Vagina (tissue), 2 donors: ENCODE measurements at regions of chr12 and their contacts with region 1.

Region 1: DNA sequence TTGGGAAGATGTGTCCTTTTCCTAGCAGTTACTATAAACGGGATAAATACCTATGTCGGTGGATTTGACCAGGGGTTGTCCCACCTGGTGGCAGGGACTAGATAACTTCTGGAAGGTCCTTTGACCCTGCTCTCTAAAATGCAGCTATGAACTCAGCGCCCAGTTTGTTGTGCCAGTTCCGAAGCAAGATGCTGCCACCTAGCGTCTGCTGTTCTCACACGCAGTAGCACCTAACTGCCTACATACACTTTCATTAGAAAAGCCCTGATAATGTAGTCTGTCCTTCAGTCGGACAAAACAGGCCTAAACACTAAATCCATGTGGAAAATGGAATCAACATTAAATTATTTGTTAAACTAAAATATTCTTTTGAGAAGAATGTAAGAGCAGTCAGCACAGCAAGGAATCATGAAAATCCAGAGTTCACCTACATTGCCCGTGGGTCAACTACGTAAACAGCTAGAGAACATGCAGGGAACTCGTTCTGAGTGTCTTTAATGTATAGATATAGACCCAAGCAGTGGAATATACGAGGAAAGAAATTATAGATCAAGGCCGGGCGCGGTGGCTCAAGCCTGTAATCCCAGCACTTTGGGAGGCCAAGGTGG is 51.1 kb upstream of the CRACR2A start:
- DNase-seq: no peak
- H3K4me3 ChIP-seq: no peak overlapping the region
- H3K27ac ChIP-seq: no peak overlapping the region
- H3K4me1 ChIP-seq: no peaks in the 10 kb centered on the region
- H3K27me3 ChIP-seq: no peaks in the 10 kb centered on the region
- CTCF ChIP-seq: peak; percentile 62 to 88 (median 74)
- POLR2A ChIP-seq: no peak

Region 2: DNA sequence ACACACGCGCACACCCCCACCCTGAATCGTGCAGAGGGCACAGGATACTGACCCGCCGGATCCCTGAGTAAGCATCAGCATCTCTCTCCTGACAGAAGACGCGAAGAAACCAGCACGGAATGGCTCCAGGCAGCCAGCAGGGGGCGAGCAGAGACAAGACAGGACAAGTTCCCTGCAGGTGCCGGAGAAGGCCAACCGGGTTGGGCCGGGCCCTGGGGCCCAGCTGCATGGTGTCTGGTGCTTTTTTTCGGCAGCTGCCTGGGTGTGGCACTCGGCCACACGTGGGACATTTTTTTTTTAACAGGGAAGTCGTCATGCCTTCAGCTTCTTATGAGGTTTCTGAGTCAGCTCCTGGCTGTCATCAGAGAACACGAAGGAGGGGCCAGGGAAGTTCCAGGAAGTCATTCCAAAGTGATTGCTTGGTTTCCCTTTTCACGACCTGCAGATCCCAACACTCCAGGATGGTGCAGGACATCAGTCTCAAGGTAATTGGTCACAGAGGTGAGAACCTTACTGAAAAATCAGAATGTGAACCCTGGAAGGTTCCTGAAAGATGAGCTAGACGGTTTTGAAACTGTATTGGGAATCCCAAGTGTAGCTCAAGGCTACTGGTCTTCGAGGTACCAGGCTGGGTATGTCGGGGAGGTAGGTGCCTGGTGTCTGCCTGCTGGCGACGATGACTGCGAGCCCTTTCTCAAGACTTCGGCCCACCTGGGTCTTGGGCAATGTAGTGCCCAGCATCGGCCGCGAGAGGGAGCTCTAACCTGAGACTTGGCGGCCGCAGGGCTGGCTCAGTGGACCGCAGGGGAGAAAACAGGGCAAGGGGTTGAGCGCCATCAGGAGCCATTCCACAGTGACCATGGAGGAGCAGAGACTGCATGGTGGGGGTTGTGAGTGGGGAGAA is 503.8 kb before region 1 on chr12:
- intact Hi-C with region 1: loop called (anchors 10 kb)
- DNase-seq: peak in 1 of 2 donors; percentile 96
- H3K4me3 ChIP-seq: peak overlapping the region; percentile 8 to 20
- H3K27ac ChIP-seq: peak overlapping the region; percentile 45
- H3K4me1 ChIP-seq: peaks cover 35% of the 10 kb centered on the region
- H3K27me3 ChIP-seq: no peaks in the 10 kb centered on the region
- CTCF ChIP-seq: peak; percentile 75 to 84 (median 84)
- POLR2A ChIP-seq: no peak

Region 3: DNA sequence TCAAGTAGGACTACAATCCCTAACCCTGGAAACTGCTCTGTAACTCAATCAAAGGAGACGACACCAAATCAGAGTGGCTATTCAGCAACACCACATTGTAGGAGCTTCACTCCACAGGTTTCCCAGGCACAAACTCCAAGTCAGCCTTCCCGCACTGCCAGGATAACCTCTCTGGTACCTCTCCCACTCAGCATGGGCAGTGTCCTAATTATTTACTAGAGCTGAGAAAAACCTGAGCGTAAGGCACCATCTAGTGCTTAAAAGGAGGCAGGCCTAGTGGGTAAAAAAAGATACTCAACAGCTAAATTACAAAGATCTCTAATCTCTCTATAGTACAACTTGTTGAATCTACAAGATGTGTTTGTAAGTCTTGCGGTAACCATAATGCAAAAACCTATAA is 33.1 kb after region 1 on chr12:
- intact Hi-C with region 1: no loop called
- DNase-seq: no peak
- H3K4me3 ChIP-seq: no peak overlapping the region
- H3K27ac ChIP-seq: no peak overlapping the region
- H3K4me1 ChIP-seq: no peaks in the 10 kb centered on the region
- H3K27me3 ChIP-seq: no peaks in the 10 kb centered on the region
- CTCF ChIP-seq: no peak
- POLR2A ChIP-seq: no peak